ENCODE measurements at regions of chr3 and their contacts with region 1.

Region 1: DNA sequence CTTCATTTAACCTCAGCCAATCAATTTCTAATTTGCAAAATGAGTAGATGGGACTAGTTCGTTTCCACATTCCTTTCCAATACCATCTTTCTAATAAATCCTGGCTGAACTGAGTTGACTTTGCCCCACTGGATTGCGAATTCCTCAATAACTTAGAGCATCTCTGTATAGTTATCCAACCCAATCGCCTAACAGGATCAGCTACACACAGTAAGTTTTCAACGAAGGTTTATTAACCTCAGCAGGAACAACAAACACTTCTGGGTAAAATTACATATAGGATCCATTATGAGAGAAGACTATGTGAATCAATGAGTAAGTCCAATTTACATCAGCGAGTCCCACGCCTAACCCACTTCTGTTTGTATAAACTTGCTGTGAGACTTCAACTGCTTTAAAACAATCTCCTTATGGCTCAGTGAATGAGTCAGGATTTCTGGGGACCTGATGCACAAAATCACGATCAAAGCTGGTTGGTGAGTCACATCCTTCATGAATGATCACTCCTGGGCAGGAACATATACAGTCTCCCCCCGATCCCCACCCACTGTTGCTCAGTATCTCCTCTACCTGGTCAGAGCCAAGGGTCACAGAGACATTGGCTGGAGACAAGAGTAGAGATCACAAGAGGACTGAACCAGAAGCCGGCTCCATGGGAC is 142.8 kb downstream of the EDEM1 start:
- DNase-seq: no peak
- H3K4me3 Mint-ChIP-seq: no peak overlapping the region
- H3K27ac Mint-ChIP-seq: no peak overlapping the region
- H3K4me1 Mint-ChIP-seq: peaks cover 8% of the 10 kb centered on the region
- H3K27me3 Mint-ChIP-seq: peaks cover 4% of the 10 kb centered on the region

Region 2: DNA sequence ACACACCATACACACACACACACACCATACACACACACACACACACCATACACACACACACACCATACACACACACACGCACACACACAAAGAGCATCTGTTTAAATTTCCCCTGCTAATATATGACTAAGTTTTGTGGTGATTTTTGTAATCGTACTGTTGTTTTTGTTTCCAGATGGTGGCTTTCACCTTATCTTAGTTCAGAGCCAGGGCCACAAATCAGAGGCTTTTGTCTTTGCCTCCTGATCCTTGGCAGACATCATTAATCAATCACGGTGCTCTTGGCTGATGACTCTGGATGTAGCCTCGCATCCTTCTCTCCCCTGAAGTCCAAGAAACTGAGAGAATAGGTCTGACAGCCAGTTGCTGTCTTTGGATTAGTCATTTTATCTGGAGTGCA is 90.7 kb before region 1 on chr3:
- intact Hi-C with region 1: loop called (anchors 5 kb)
- DNase-seq: no peak
- H3K4me3 Mint-ChIP-seq: no peak overlapping the region
- H3K27ac Mint-ChIP-seq: no peak overlapping the region
- H3K4me1 Mint-ChIP-seq: no peaks in the 10 kb centered on the region
- H3K27me3 Mint-ChIP-seq: no peaks in the 10 kb centered on the region

Region 3: GRCh38 chr3:5520237-5520636 is 190.0 kb after region 1 on chr3:
- intact Hi-C with region 1: no loop called
- DNase-seq: no peak
- H3K4me3 Mint-ChIP-seq: no peak overlapping the region
- H3K27ac Mint-ChIP-seq: no peak overlapping the region
- H3K4me1 Mint-ChIP-seq: no peaks in the 10 kb centered on the region
- H3K27me3 Mint-ChIP-seq: no peaks in the 10 kb centered on the region

Region 4: DNA sequence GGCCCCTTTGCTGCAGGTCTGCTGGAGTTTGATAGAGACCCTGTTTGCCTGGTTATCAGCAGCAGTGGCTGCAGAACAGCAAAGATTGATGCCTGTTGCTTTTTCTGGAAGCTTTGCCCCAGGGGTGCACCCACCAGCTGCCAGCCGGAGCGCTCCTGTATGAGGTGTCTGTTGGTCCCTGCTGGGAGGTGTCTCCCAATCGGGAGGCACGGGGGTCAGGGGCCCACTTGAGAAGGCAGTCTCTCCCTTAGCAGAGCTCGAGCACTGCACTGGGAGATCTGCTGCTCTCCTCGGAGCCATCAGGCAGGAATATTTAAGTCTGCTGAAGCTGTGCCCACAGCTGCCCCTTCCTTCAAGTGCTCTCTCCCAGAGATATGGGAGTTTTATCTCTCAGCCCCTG is 705.4 kb after region 1 on chr3:
- intact Hi-C with region 1: no loop called
- DNase-seq: no peak
- H3K4me3 Mint-ChIP-seq: no peak overlapping the region
- H3K27ac Mint-ChIP-seq: no peak overlapping the region
- H3K4me1 Mint-ChIP-seq: no peaks in the 10 kb centered on the region
- H3K27me3 Mint-ChIP-seq: no peaks in the 10 kb centered on the region

Measured in activated T-helper 1 cell treated with anti-CD3 and anti-CD28 coated beads, Interleukin-12 subunit alpha, Interleukin-12 subunit beta, Interleukin-2, Interleukin-4 antibody, amounts not matched to agents 30 ng/mL and 10 ng/mL and 1 ng/mL, durations not matched to agents 14 hours and 24 hours and 36 hours (primary cell).